CD4-positive, alpha-beta T cell (primary cell): ENCODE measurements at regions of chr7 and their contacts with region 1.

Region 1: DNA sequence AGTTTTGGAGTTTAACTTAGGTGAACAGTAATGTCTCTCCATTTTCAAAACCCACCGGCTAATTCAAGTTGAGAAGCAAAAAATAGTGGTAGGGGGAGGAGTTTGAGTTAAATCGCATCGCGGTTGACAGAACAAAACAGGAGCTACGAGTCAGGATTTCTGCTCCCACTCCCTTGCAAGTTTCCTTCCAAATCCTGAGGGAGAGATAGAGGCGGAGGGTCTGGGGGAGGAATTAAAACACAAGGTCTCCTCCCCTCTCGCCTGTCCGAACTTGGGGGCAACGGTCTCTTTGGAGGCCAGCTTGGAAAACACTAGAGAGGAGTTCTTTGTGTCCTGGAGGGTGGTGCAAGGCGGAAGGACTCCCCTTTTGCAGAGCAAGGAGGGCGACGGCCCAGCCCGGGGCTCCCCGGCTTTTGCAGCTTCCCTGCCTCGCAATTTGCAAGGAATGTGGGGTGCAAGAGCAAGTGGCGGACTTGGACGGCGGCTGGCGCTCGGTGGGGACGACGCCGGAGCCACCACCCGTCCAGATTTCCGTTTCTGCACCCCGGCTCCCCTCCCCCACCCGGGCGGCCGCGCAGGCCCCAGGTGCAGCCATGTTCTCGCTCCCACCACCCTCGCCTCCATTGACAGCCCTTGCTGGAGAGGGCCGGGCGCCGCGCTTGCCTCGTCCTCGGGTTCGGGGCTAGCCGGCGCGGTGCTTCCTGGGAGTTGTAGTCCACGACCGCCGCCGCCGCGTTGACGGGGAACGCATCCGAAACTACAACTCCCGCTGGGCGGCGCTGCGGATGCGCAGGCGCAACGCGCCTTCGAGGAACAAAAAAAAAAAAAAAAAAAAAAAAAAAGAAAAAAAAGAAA is 454 bp upstream of the GTF2I start:
- DNase-seq: peak; percentile 94 to 99 (median 98)
- ATAC-seq: peak; percentile 77
- H3K4me3 ChIP-seq: peak overlapping the region; percentile 95
- H3K4me3 Mint-ChIP-seq: peak overlapping the region; percentile 89
- H3K27ac ChIP-seq: peak overlapping the region; percentile 3 to 72
- H3K27ac Mint-ChIP-seq: peak overlapping the region; percentile 79
- H3K4me1 ChIP-seq: peaks cover 49% of the 10 kb centered on the region
- H3K4me1 Mint-ChIP-seq: peaks cover 46% of the 10 kb centered on the region
- H3K27me3 ChIP-seq: no peaks in the 10 kb centered on the region
- H3K27me3 Mint-ChIP-seq: no peaks in the 10 kb centered on the region
- CTCF ChIP-seq: no peak

Region 2: GRCh38 chr7:74173866-74174605 is 483.0 kb before region 1 on chr7 and contains the start of gene EIF4H:
- CTCF ChIA-PET with region 1: interaction called, 3 read pairs
- POLR2A ChIA-PET with region 1: no interaction called
- intact Hi-C with region 1: loop called in 1 of 2 experiments (anchors 10 kb)
- DNase-seq: peak; percentile 92 to 98 (median 95)
- ATAC-seq: peak; percentile 85
- H3K4me3 ChIP-seq: peak within 1 kb of the TSS; percentile 85
- H3K4me3 Mint-ChIP-seq: peak within 1 kb of the TSS; percentile 96
- H3K27ac ChIP-seq: peak within 1 kb of the TSS; percentile 61 to 75
- H3K27ac Mint-ChIP-seq: peak within 1 kb of the TSS; percentile 95
- H3K4me1 ChIP-seq: peaks cover 46% of the 10 kb centered on the region
- H3K4me1 Mint-ChIP-seq: peaks cover 53% of the 10 kb centered on the region
- H3K27me3 ChIP-seq: no peaks in the 10 kb centered on the region
- H3K27me3 Mint-ChIP-seq: no peaks in the 10 kb centered on the region
- CTCF ChIP-seq: no peak
- total RNA-seq, gene EIF4H: 311 to 316 TPM

Region 3: GRCh38 chr7:74254129-74254857 is 402.8 kb before region 1 on chr7 and contains the start of gene RFC2:
- CTCF ChIA-PET with region 1: no interaction called
- POLR2A ChIA-PET with region 1: no interaction called
- intact Hi-C with region 1: loop called in 1 of 2 experiments (anchors 5 kb)
- DNase-seq: peak; percentile 91 to 99 (median 96)
- ATAC-seq: peak; percentile 96
- H3K4me3 ChIP-seq: peak within 1 kb of the TSS; percentile 92
- H3K4me3 Mint-ChIP-seq: peak within 1 kb of the TSS; percentile 92
- H3K27ac ChIP-seq: peak within 1 kb of the TSS; percentile 83
- H3K27ac Mint-ChIP-seq: peak within 1 kb of the TSS; percentile 93
- H3K4me1 ChIP-seq: peaks cover 31% of the 10 kb centered on the region
- H3K4me1 Mint-ChIP-seq: peaks cover 26% of the 10 kb centered on the region
- H3K27me3 ChIP-seq: no peaks in the 10 kb centered on the region
- H3K27me3 Mint-ChIP-seq: no peaks in the 10 kb centered on the region
- CTCF ChIP-seq: peak; percentile 33
- total RNA-seq, gene RFC2: 8.5 to 9.6 TPM

Region 4: GRCh38 chr7:74449809-74450397 is 207.2 kb before region 1 on chr7:
- CTCF ChIA-PET with region 1: no interaction called
- POLR2A ChIA-PET with region 1: no interaction called
- intact Hi-C with region 1: loop called in 1 of 2 experiments (anchors 5 kb)
- DNase-seq: peak; percentile 47 to 86 (median 61)
- ATAC-seq: peak; percentile 12
- H3K4me3 ChIP-seq: no peak overlapping the region
- H3K4me3 Mint-ChIP-seq: peak overlapping the region; percentile 49
- H3K27ac ChIP-seq: no peak overlapping the region
- H3K27ac Mint-ChIP-seq: peak overlapping the region; percentile 73
- H3K4me1 ChIP-seq: peaks cover 38% of the 10 kb centered on the region
- H3K4me1 Mint-ChIP-seq: peaks cover 17% of the 10 kb centered on the region
- H3K27me3 ChIP-seq: no peaks in the 10 kb centered on the region
- H3K27me3 Mint-ChIP-seq: no peaks in the 10 kb centered on the region
- CTCF ChIP-seq: peak; percentile 77

Region 5: GRCh38 chr7:74544706-74545469 is 112.2 kb before region 1 on chr7:
- CTCF ChIA-PET with region 1: no interaction called
- POLR2A ChIA-PET with region 1: no interaction called
- intact Hi-C with region 1: no loop called
- DNase-seq: peak in 6 of 14 experiments; percentile 2 to 49 (median 18)
- ATAC-seq: no peak
- H3K4me3 ChIP-seq: no peak overlapping the region
- H3K4me3 Mint-ChIP-seq: no peak overlapping the region
- H3K27ac ChIP-seq: no peak overlapping the region
- H3K27ac Mint-ChIP-seq: no peak overlapping the region
- H3K4me1 ChIP-seq: no peaks in the 10 kb centered on the region
- H3K4me1 Mint-ChIP-seq: no peaks in the 10 kb centered on the region
- H3K27me3 ChIP-seq: no peaks in the 10 kb centered on the region
- H3K27me3 Mint-ChIP-seq: no peaks in the 10 kb centered on the region
- CTCF ChIP-seq: peak; percentile 33

Region 6: DNA sequence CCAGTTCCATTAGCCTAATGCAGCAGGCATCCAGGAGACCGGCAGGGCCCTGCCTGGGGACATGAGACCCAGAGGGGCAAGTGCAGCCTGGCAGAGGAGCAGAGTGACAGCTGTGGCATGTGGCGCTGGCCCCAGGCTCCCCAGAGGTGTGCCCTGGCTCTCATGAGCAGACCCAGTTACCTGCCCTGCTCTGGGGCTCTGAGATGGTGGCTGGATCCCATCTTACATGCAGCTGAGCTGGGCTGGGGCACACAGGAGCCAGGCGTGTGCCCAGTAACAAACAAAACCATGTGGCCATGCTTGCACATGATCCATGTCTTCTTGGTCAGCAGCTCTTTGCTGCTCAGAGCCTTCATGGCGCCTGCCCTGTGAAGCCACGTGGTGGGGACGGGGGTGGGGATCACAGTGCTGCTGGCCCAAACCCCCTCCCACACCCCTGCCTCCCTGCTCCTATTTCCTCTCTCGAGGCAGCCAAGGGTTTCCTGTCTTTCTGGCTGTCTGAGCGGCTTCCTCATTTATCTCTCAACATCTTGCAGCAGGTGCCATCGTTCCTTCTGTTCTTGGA is 39.8 kb before region 1 on chr7:
- CTCF ChIA-PET with region 1: no interaction called
- POLR2A ChIA-PET with region 1: interaction called, 11 read pairs
- intact Hi-C with region 1: no loop called
- DNase-seq: peak in 8 of 14 experiments; percentile 2 to 72 (median 39)
- ATAC-seq: peak; percentile 65
- H3K4me3 ChIP-seq: no peak overlapping the region
- H3K4me3 Mint-ChIP-seq: peak overlapping the region; percentile 83
- H3K27ac ChIP-seq: peak overlapping the region in 1 of 2 donors; percentile 10
- H3K27ac Mint-ChIP-seq: peak overlapping the region; percentile 83
- H3K4me1 ChIP-seq: peaks cover 22% of the 10 kb centered on the region
- H3K4me1 Mint-ChIP-seq: peaks cover 20% of the 10 kb centered on the region
- H3K27me3 ChIP-seq: no peaks in the 10 kb centered on the region
- H3K27me3 Mint-ChIP-seq: no peaks in the 10 kb centered on the region
- CTCF ChIP-seq: no peak

Region 7: GRCh38 chr7:74637745-74638144 is 19.3 kb before region 1 on chr7:
- CTCF ChIA-PET with region 1: no interaction called
- POLR2A ChIA-PET with region 1: no interaction called
- intact Hi-C with region 1: no loop called
- DNase-seq: no peak
- ATAC-seq: no peak
- H3K4me3 ChIP-seq: no peak overlapping the region
- H3K4me3 Mint-ChIP-seq: no peak overlapping the region
- H3K27ac ChIP-seq: no peak overlapping the region
- H3K27ac Mint-ChIP-seq: no peak overlapping the region
- H3K4me1 ChIP-seq: no peaks in the 10 kb centered on the region
- H3K4me1 Mint-ChIP-seq: no peaks in the 10 kb centered on the region
- H3K27me3 ChIP-seq: no peaks in the 10 kb centered on the region
- H3K27me3 Mint-ChIP-seq: no peaks in the 10 kb centered on the region
- CTCF ChIP-seq: no peak

Region 8: GRCh38 chr7:74672343-74672915 is 15.4 kb after region 1 on chr7:
- CTCF ChIA-PET with region 1: no interaction called
- POLR2A ChIA-PET with region 1: interaction called, 7 read pairs
- intact Hi-C with region 1: loop called in 1 of 2 experiments (anchors 2 kb)
- DNase-seq: no peak
- ATAC-seq: no peak
- H3K4me3 ChIP-seq: no peak overlapping the region
- H3K4me3 Mint-ChIP-seq: no peak overlapping the region
- H3K27ac ChIP-seq: no peak overlapping the region
- H3K27ac Mint-ChIP-seq: peak overlapping the region; percentile 62
- H3K4me1 ChIP-seq: peaks cover 15% of the 10 kb centered on the region
- H3K4me1 Mint-ChIP-seq: peaks cover 55% of the 10 kb centered on the region
- H3K27me3 ChIP-seq: no peaks in the 10 kb centered on the region
- H3K27me3 Mint-ChIP-seq: no peaks in the 10 kb centered on the region
- CTCF ChIP-seq: no peak

Region 9: DNA sequence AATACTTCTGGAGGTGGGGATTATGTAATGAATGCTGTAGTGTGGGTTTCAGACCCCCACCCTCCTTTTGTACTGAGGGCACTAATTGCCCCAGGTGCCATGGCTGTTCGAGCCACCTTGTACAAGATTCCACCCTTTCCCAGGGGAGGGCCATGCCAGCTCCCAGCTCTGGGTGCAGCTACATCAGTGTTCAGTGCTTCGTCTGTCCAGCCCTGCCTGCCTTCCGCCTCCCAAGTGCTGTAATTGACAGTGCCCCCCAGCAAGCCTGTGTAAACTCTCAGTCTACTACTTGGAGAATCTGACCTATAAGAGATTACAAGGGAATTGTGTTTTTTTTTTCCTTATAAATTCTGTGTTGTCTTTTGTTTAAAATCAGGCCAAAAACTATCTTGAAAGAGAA is 33.4 kb after region 1 on chr7:
- CTCF ChIA-PET with region 1: no interaction called
- POLR2A ChIA-PET with region 1: interaction called, 3 read pairs
- intact Hi-C with region 1: loop called in 1 of 2 experiments (anchors 5 kb)
- DNase-seq: no peak
- ATAC-seq: no peak
- H3K4me3 ChIP-seq: no peak overlapping the region
- H3K4me3 Mint-ChIP-seq: no peak overlapping the region
- H3K27ac ChIP-seq: no peak overlapping the region
- H3K27ac Mint-ChIP-seq: no peak overlapping the region
- H3K4me1 ChIP-seq: peaks cover 8% of the 10 kb centered on the region
- H3K4me1 Mint-ChIP-seq: peaks cover 15% of the 10 kb centered on the region
- H3K27me3 ChIP-seq: no peaks in the 10 kb centered on the region
- H3K27me3 Mint-ChIP-seq: no peaks in the 10 kb centered on the region
- CTCF ChIP-seq: no peak